ENCODE measurements at regions of chr1 and their contacts with region 1.

Region 1: DNA sequence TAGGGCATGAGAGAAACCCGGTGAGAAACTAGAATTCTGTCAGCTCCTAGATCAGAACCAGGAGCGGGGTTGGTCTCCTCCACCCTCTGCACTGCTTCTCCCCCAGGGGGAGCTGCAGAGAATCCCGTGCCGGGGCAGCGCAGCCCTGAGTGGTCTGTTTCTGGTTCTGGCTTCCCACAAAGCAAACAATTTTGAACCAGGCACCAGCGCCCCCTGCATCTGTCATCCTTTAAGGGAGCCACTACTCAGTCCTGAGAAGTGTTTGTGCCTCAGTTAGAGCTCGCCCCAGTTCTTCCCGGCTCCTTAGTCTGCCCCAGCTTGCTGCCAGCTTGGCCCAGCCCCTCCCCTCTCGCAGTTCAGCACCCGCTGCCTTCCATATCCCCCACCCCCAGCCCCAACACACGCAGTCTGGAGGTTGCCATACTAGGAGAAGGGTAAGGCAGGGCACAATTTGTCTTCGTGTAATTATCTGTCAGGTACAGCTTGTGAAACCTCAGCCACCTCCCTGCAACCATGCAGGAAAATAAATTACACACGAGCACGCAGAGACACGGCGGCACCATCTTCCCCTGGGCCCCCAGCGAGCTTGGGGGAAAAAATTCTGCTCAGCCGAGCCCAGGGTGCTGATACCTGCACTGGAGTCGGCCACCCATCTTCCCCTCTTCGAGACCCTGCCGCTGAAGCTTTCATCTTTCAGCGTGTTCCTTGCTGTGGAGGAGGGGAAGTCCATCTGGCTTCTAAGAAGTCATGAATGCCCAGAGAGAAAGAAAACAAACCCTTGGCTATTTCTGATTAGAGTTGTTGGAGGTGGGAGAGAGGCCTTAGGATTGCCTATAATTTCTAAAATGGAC is 62.6 kb upstream of the CD1D start:
- DNase-seq: peak; percentile 72 to 87
- H3K4me3 ChIP-seq: peak overlapping the region in 1 of 4 experiments; percentile 38; a peak in 1 of 8 replicates
- H3K27ac ChIP-seq: no peak overlapping the region
- H3K4me1 ChIP-seq: peaks cover 0 to 26% (median 13%) of the 10 kb centered on the region in 4 experiments; a peak in 6 of 7 replicates
- H3K27me3 ChIP-seq: peaks cover 0 to 4% (median 1%) of the 10 kb centered on the region in 4 experiments; a peak in 2 of 7 replicates
- CTCF ChIP-seq: peak; percentile 74 to 96 (median 83)
- EP300 ChIP-seq: no peak; a peak in 1 of 3 replicates
- POLR2A ChIP-seq: no peak
- RAD21 ChIP-seq: peak; percentile 56 to 69

Region 2: DNA sequence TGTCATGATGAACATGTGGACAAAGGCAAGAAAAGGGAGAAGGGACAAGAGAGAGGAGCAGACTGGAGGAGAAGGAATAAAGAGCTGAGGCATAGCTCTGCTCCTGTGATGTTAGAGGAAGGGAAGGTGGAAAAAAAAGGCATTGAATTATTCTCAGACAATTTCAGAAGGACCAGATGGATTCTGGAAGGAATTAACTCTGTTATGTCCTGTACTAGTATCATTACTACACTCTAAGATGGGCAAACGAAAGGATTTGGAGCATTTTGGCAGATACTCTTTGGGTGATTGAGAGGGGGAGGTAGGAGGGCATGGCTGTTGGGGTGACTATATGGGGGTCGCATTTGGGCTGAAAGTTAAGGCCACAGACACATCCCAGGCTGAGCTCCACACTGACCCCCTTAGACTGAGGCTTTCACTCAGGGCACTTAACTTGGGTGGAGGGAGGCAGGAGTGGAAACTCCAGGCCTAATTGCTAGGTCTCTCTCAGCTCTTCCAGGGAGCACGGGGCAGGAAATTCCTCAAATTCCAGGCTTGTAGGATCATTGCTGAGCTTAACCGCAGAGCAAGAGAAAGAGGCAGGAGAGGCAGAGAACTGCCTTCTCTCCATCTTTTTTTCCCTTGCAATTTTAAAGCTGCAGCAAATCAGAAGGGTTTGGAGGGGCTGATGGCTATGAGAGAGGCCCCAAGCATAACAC is 98.8 kb before region 1 on chr1:
- CTCF ChIA-PET with region 1: interaction called, 13 read pairs
- POLR2A ChIA-PET with region 1: interaction called, 3 read pairs
- DNase-seq: peak in 1 of 2 experiments; percentile 57
- H3K4me3 ChIP-seq: peak overlapping the region in 1 of 4 experiments; percentile 40; a peak in 1 of 8 replicates
- H3K27ac ChIP-seq: peak overlapping the region; percentile 74
- H3K4me1 ChIP-seq: peaks cover 15 to 47% (median 23%) of the 10 kb centered on the region in 4 experiments
- H3K27me3 ChIP-seq: no peaks in the 10 kb centered on the region
- CTCF ChIP-seq: no peak
- EP300 ChIP-seq: 0 out of 3 replicates have a peak, but pooled peaks of 1 of the 2 experiments have one; percentile 22
- POLR2A ChIP-seq: peak; percentile 40 to 71
- RAD21 ChIP-seq: no peak

Region 3: GRCh38 chr1:158035976-158036583 is 82.0 kb before region 1 on chr1:
- CTCF ChIA-PET with region 1: interaction called, 33 read pairs
- POLR2A ChIA-PET with region 1: no interaction called
- DNase-seq: no peak
- H3K4me3 ChIP-seq: no peak overlapping the region
- H3K27ac ChIP-seq: no peak overlapping the region; the same call in 1 of the 2 replicates
- H3K4me1 ChIP-seq: peaks cover 3 to 12% (median 7%) of the 10 kb centered on the region in 4 experiments
- H3K27me3 ChIP-seq: no peaks in the 10 kb centered on the region
- CTCF ChIP-seq: peak in 2 of 3 experiments; percentile 57 to 65; a peak in 3 of 4 replicates
- EP300 ChIP-seq: no peak
- POLR2A ChIP-seq: no peak
- RAD21 ChIP-seq: peak; percentile 51 to 61

Region 4: DNA sequence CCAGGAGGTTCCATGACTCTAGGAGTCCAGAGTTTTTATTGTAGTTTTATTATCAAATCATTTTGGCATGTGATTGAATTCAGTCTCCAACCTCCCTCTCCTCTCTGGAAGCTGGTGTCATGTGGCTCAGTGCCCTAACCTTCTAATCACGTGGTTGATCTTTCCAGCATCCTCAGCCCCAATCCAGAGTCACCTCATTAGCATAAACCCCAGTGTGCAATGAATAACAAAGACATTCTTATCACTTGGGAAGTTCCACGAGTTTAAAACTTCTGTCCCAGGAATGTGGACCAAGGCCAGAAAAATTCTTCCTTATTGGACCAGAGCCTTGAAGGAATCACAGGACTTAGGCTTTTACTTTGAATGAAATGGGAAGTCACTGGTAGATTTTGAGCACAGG is 72.4 kb before region 1 on chr1:
- CTCF ChIA-PET with region 1: interaction called, 13 read pairs
- POLR2A ChIA-PET with region 1: no interaction called
- DNase-seq: peak in 1 of 2 experiments; percentile 17
- H3K4me3 ChIP-seq: no peak overlapping the region; a peak in 1 of 8 replicates
- H3K27ac ChIP-seq: no peak overlapping the region
- H3K4me1 ChIP-seq: peaks cover 2 to 19% (median 12%) of the 10 kb centered on the region in 4 experiments
- H3K27me3 ChIP-seq: no peaks in the 10 kb centered on the region
- CTCF ChIP-seq: no peak
- EP300 ChIP-seq: no peak
- POLR2A ChIP-seq: no peak
- RAD21 ChIP-seq: no peak

Region 5: GRCh38 chr1:158055854-158056253 is 62.2 kb before region 1 on chr1:
- CTCF ChIA-PET with region 1: interaction called, 27 read pairs
- POLR2A ChIA-PET with region 1: no interaction called
- DNase-seq: no peak
- H3K4me3 ChIP-seq: no peak overlapping the region
- H3K27ac ChIP-seq: no peak overlapping the region
- H3K4me1 ChIP-seq: peaks cover 1 to 24% (median 12%) of the 10 kb centered on the region in 4 experiments
- H3K27me3 ChIP-seq: no peaks in the 10 kb centered on the region
- CTCF ChIP-seq: no peak
- EP300 ChIP-seq: no peak
- POLR2A ChIP-seq: no peak
- RAD21 ChIP-seq: no peak

Region 6: GRCh38 chr1:158067662-158068061 is 50.4 kb before region 1 on chr1:
- CTCF ChIA-PET with region 1: interaction called, 14 read pairs
- POLR2A ChIA-PET with region 1: no interaction called
- DNase-seq: no peak
- H3K4me3 ChIP-seq: no peak overlapping the region
- H3K27ac ChIP-seq: no peak overlapping the region
- H3K4me1 ChIP-seq: peaks cover 0 to 17% (median 6%) of the 10 kb centered on the region in 4 experiments; a peak in 5 of 7 replicates
- H3K27me3 ChIP-seq: no peaks in the 10 kb centered on the region
- CTCF ChIP-seq: no peak
- EP300 ChIP-seq: no peak
- POLR2A ChIP-seq: no peak
- RAD21 ChIP-seq: no peak

Region 7: DNA sequence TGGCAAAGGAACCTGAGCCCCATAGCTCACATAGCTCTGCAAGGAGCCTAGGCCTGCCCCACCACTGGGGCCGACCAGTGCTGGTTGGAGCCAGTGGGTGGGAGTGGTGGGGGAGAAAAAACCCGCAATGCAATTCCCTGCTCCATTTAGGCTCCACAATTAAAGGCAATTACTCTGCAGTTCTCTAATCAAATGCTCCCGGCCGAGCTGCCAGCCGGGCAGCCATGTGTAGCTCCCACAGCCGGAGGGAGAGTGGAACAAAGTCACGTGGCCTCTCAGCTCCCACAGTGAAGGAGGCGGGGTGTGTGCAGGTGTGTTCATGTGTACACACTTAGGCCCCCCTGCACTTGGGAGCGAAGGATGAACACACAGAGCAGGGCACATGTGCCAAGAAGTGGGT is 43.0 kb before region 1 on chr1:
- CTCF ChIA-PET with region 1: interaction called, 62 read pairs
- POLR2A ChIA-PET with region 1: no interaction called
- DNase-seq: no peak
- H3K4me3 ChIP-seq: no peak overlapping the region
- H3K27ac ChIP-seq: no peak overlapping the region
- H3K4me1 ChIP-seq: peaks cover 0 to 38% (median 25%) of the 10 kb centered on the region in 4 experiments; a peak in 6 of 7 replicates
- H3K27me3 ChIP-seq: no peaks in the 10 kb centered on the region
- CTCF ChIP-seq: no peak
- EP300 ChIP-seq: no peak
- POLR2A ChIP-seq: no peak
- RAD21 ChIP-seq: no peak